HCT116 (cell line): ENCODE measurements at regions of chr2 and their contacts with region 1.

Region 1: GRCh38 chr2:195318440-195319111 is 338.4 kb upstream of the SLC39A10 start:
- DNase-seq: peak; percentile 22
- ATAC-seq: peak; percentile 62
- H3K4me3 ChIP-seq: no peak overlapping the region
- H3K27ac ChIP-seq: no peak overlapping the region
- H3K4me1 ChIP-seq: peaks cover 2 to 3% of the 10 kb centered on the region in 2 experiments; a peak in 2 of 4 replicates
- H3K27me3 ChIP-seq: no peaks in the 10 kb centered on the region
- CTCF ChIP-seq: peak; percentile 38 to 77 (median 58); a peak in 4 of 6 replicates
- POLR2A ChIP-seq: no peak
- RAD21 ChIP-seq: peak; percentile 85

Region 2: DNA sequence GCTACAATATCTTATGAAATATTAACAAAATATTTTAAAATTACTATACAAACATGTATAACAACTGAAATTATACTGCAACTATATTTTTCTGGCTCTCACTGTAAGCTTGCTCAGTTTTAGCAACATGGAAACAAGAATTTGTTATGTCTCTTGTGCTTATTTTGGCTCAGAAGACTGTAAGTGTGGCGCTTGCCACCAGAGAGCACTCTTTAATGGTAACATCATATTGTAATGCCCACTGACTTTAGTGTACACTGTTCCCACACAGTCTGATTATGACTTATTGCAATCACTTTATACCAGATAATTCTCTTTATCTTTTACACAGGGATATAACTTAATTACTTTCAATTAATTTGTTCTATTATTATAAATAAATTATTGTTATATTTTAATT is 1623.2 kb before region 1 on chr2:
- CTCF ChIA-PET with region 1: no interaction called
- POLR2A ChIA-PET with region 1: no interaction called
- RAD21 ChIA-PET with region 1: no interaction called
- intact Hi-C with region 1: loop called (anchors 10 kb)
- DNase-seq: peak; percentile 22
- ATAC-seq: peak; percentile 86
- H3K4me3 ChIP-seq: no peak overlapping the region
- H3K27ac ChIP-seq: no peak overlapping the region
- H3K4me1 ChIP-seq: no peaks in the 10 kb centered on the region
- H3K27me3 ChIP-seq: no peaks in the 10 kb centered on the region
- CTCF ChIP-seq: peak; percentile 39 to 65 (median 55); a peak in 5 of 6 replicates
- POLR2A ChIP-seq: no peak
- RAD21 ChIP-seq: peak; percentile 68

Region 3: GRCh38 chr2:194166818-194167217 is 1151.8 kb before region 1 on chr2:
- CTCF ChIA-PET with region 1: no interaction called
- POLR2A ChIA-PET with region 1: no interaction called
- RAD21 ChIA-PET with region 1: no interaction called
- intact Hi-C with region 1: loop called (anchors 10 kb)
- DNase-seq: peak; percentile 40
- ATAC-seq: peak; percentile 76
- H3K4me3 ChIP-seq: no peak overlapping the region
- H3K27ac ChIP-seq: no peak overlapping the region
- H3K4me1 ChIP-seq: no peaks in the 10 kb centered on the region
- H3K27me3 ChIP-seq: no peaks in the 10 kb centered on the region
- CTCF ChIP-seq: peak; percentile 20 to 56 (median 53); a peak in 5 of 6 replicates
- POLR2A ChIP-seq: no peak
- RAD21 ChIP-seq: peak; percentile 51

Region 4: GRCh38 chr2:194545978-194546377 is 772.6 kb before region 1 on chr2:
- CTCF ChIA-PET with region 1: no interaction called
- POLR2A ChIA-PET with region 1: no interaction called
- RAD21 ChIA-PET with region 1: no interaction called
- intact Hi-C with region 1: loop called (anchors 2 kb)
- DNase-seq: peak; percentile 2
- ATAC-seq: no peak
- H3K4me3 ChIP-seq: no peak overlapping the region
- H3K27ac ChIP-seq: no peak overlapping the region
- H3K4me1 ChIP-seq: peaks cover 0 to 7% of the 10 kb centered on the region in 2 experiments; a peak in 1 of 4 replicates
- H3K27me3 ChIP-seq: no peaks in the 10 kb centered on the region
- CTCF ChIP-seq: peak in 2 of 3 experiments; percentile 41 to 49; a peak in 2 of 6 replicates
- POLR2A ChIP-seq: no peak
- RAD21 ChIP-seq: peak; percentile 69

Region 5: DNA sequence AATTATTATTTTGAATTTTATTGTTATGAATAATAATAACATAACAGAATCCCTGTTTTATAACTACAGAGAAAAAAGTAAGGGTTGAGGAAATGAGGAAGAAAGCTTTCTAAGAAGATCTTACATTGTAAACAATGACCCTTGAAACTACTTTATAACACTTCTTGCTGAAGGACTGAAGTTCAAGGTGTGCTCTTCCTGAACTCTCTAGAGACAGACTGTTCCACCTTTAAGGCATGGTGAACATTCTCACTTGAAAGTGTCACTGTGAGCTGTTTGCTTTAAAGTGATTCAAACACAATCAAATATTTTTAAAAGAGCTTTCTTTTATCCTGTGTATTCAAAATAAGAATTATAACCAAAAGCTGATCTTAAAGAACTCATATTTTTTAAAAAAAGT is 618.6 kb after region 1 on chr2:
- CTCF ChIA-PET with region 1: no interaction called
- POLR2A ChIA-PET with region 1: no interaction called
- RAD21 ChIA-PET with region 1: no interaction called
- intact Hi-C with region 1: loop called (anchors 5 kb)
- DNase-seq: no peak
- ATAC-seq: no peak
- H3K4me3 ChIP-seq: no peak overlapping the region
- H3K27ac ChIP-seq: no peak overlapping the region
- H3K4me1 ChIP-seq: no peaks in the 10 kb centered on the region
- H3K27me3 ChIP-seq: no peaks in the 10 kb centered on the region
- CTCF ChIP-seq: no peak
- POLR2A ChIP-seq: no peak
- RAD21 ChIP-seq: no peak